ENCODE measurements at regions of chr4 and their contacts with region 1.

Region 1: DNA sequence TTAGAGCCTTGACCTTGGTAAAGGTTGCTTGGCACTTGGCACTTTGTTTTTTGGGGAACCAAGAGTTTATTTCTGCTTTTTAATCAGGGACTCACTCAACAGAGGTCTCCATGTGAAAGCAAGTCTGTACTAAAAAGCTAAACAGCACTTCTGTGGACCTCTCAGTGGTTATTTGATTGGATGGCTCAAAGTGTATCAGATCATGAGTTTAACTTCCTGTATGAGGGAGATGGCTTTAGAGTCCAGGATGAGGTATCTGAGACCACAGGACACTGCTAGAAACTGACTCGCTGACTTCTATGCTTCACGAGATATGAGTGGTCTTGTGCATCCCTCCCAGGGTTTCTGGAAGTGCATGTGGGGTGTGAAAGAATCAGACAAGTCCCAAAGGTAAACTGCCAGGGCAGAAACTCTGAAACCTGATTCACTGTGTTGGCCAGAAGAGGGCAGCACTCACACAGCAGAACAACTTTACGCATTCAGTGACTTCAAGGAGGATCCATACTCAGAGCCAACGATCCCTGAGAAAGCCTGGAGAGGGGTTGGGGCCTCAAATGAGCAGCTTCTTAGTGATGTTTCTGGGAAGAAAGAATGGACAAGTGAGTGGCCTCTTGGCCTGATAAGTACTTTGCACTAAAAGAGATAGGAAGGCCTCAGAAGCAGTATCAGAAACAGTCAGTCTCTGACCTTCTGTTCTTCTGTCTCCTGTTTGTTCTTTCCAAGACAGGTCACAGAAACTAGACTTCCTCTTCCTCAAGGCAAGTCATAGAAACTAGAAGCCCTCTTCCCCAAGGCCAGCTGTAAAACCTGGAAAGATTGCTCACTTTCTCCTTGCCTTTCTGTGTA is 220.3 kb upstream of the CXCL13 start:
- DNase-seq: peak; percentile 21 to 53
- ATAC-seq: peak; percentile 69 to 86 (median 78)
- H3K4me3 ChIP-seq: no peak overlapping the region
- H3K27ac ChIP-seq: no peak overlapping the region
- H3K4me1 ChIP-seq: no peaks in the 10 kb centered on the region
- H3K27me3 ChIP-seq: no peaks in the 10 kb centered on the region
- CTCF ChIP-seq: peak; percentile 75

Region 2: DNA sequence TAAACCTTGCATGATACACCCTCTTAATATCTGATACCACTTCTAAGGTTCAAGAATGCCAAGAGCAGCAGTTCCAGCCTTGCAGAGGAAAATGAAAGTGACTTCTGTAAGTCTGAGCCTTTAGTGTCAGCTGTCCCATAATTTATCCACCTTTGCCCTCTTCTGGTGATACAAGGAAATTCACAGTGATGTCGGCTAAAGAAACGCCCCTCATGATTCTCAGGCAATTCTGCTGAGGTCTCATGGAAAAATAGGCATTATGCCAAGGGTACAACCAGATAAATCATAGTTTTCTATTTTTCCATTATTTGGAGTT is 48.0 kb after region 1 on chr4:
- intact Hi-C with region 1: loop called (anchors 2 to 5 kb)
- DNase-seq: no peak
- ATAC-seq: peak; percentile 57 to 87 (median 68)
- H3K4me3 ChIP-seq: no peak overlapping the region
- H3K27ac ChIP-seq: no peak overlapping the region
- H3K4me1 ChIP-seq: no peaks in the 10 kb centered on the region
- H3K27me3 ChIP-seq: no peaks in the 10 kb centered on the region
- CTCF ChIP-seq: peak; percentile 54

Region 3: DNA sequence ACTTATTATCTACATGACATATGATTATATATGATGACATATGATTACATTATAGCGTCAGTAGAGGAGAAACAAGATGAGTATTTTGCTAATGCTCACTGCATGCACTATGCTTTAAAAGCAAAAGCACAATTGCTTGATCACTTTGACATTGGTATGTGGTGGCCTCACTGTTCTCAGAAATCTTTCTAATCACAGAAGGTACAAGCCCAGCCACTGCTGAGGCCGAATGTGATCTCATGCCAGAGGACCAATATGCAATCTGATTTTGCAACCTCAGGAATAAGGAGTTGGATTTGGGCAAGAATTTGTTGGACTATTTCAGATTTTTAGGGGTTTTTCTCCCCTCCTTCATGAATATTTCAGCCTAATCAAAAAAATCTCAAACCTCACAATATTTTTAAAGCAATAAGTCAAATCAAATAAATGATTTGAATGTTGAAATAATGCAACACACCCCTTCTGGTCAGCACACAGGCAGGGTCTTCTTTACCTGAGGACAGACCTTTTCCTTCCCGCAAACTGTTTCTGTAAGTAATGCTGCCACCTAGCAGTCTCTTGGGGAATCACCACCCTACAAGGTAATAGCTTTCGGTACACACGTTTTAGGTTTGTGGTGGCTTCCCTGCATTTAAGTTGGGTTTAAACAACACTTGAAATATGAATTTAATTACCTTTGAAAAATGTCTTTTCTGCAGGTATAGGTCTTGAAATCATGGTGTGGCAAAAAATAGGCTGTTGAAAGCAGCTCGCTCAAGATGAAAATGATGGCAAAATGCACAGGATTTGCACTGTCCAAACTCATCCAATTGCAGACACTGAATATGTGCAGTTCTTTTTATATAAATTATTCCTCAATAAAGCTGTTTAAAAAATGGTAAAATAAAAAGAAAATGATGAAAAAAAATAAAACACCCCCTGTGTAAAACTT is 215.4 kb after region 1 on chr4:
- intact Hi-C with region 1: loop called (anchors 1 to 5 kb)
- DNase-seq: no peak
- ATAC-seq: peak in 1 of 4 donors; percentile 66
- H3K4me3 ChIP-seq: no peak overlapping the region
- H3K27ac ChIP-seq: no peak overlapping the region
- H3K4me1 ChIP-seq: no peaks in the 10 kb centered on the region
- H3K27me3 ChIP-seq: no peaks in the 10 kb centered on the region
- CTCF ChIP-seq: peak; percentile 58

Region 4: GRCh38 chr4:77618383-77619122 is 233.2 kb after region 1 on chr4:
- intact Hi-C with region 1: loop called in 1 of 2 experiments (anchors 5 kb)
- DNase-seq: peak in 1 of 2 donors; percentile 16
- ATAC-seq: peak; percentile 71 to 96 (median 87)
- H3K4me3 ChIP-seq: no peak overlapping the region
- H3K27ac ChIP-seq: no peak overlapping the region
- H3K4me1 ChIP-seq: no peaks in the 10 kb centered on the region
- H3K27me3 ChIP-seq: no peaks in the 10 kb centered on the region
- CTCF ChIP-seq: peak; percentile 75

Region 5: DNA sequence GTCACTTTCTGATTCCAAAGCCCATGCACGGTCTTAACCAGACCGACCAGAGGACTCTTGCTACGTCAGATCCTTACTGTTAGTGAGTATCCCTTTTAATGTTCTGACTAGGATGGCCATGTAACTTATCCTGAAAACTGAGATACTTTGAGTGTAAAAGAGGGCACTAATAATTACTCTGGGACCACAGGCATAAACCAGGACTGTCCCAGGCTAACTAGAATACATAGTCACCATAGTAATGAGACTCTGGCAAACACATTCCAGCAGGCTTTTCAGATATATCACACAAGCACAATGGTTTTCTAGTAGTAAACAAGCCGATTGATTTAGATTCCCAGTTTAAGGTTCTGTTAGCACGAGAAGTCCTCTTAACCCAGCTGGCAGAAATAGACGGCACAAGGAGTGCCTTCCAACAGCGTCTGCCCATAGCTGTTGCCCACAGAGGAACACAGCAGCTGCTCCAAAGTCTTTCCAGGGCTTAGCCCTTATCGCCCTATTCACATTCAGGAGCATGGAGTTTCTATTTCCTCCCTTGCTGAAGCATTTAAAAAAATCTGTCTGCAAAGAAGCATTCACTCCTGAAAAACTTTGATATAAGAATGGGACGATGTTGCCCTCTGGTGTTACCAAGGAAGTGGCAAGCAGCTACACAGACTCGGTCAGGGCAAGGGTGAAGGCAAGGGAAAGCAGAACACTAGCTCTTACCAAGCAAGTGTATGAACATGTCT is 312.7 kb after region 1 on chr4:
- intact Hi-C with region 1: loop called in 1 of 2 experiments (anchors 10 kb)
- DNase-seq: peak in 1 of 2 donors; percentile 51
- ATAC-seq: peak; percentile 56 to 93 (median 76)
- H3K4me3 ChIP-seq: peak overlapping the region; percentile 28
- H3K27ac ChIP-seq: peak overlapping the region; percentile 63
- H3K4me1 ChIP-seq: peaks cover 11% of the 10 kb centered on the region
- H3K27me3 ChIP-seq: no peaks in the 10 kb centered on the region
- CTCF ChIP-seq: peak; percentile 29